ENCODE measurements at regions of chr4 and their contacts with region 1.

Region 1: GRCh38 chr4:100907465-100908454 is 389.9 kb upstream of the EMCN start:
- DNase-seq: peak; percentile 7
- ATAC-seq: peak; percentile 91
- H3K4me3 ChIP-seq: no peak overlapping the region
- H3K27ac ChIP-seq: no peak overlapping the region
- H3K4me1 ChIP-seq: peaks cover 9% of the 10 kb centered on the region
- H3K27me3 ChIP-seq: no peaks in the 10 kb centered on the region
- CTCF ChIP-seq: peak; percentile 30; the same call in 1 of the 2 replicates
- EP300 ChIP-seq: no peak
- POLR2A ChIP-seq: no peak
- RAD21 ChIP-seq: no peak

Region 2: GRCh38 chr4:101098666-101099400 is 191.1 kb after region 1 on chr4:
- CTCF ChIA-PET with region 1: no interaction called
- POLR2A ChIA-PET with region 1: no interaction called
- in situ Hi-C with region 1: no loop called
- intact Hi-C with region 1: loop called (anchors 10 kb)
- DNase-seq: no peak
- ATAC-seq: no peak
- H3K4me3 ChIP-seq: no peak overlapping the region; a peak in 1 of 6 replicates
- H3K27ac ChIP-seq: no peak overlapping the region
- H3K4me1 ChIP-seq: no peaks in the 10 kb centered on the region
- H3K27me3 ChIP-seq: no peaks in the 10 kb centered on the region
- CTCF ChIP-seq: no peak
- EP300 ChIP-seq: no peak
- POLR2A ChIP-seq: no peak
- RAD21 ChIP-seq: no peak

Region 3: GRCh38 chr4:101596781-101597552 is 689.2 kb after region 1 on chr4:
- CTCF ChIA-PET with region 1: no interaction called
- POLR2A ChIA-PET with region 1: no interaction called
- in situ Hi-C with region 1: no loop called
- intact Hi-C with region 1: loop called (anchors 5 kb)
- DNase-seq: no peak
- ATAC-seq: peak; percentile 45; the same call in 1 of the 3 replicates
- H3K4me3 ChIP-seq: no peak overlapping the region
- H3K27ac ChIP-seq: no peak overlapping the region
- H3K4me1 ChIP-seq: no peaks in the 10 kb centered on the region
- H3K27me3 ChIP-seq: no peaks in the 10 kb centered on the region
- CTCF ChIP-seq: peak; percentile 36
- EP300 ChIP-seq: no peak
- POLR2A ChIP-seq: no peak
- RAD21 ChIP-seq: no peak